ENCODE measurements at regions of chr2 and their contacts with region 1.

Region 1: GRCh38 chr2:225177098-225177497 is 134.8 kb upstream of the DOCK10 start:
- DNase-seq: peak; percentile 72
- H3K4me3 ChIP-seq: no peak overlapping the region
- H3K27ac ChIP-seq: no peak overlapping the region
- H3K4me1 ChIP-seq: peaks cover 5% of the 10 kb centered on the region
- H3K27me3 ChIP-seq: no peaks in the 10 kb centered on the region
- CTCF ChIP-seq: peak in 1 of 2 donors; percentile 36

Region 2: DNA sequence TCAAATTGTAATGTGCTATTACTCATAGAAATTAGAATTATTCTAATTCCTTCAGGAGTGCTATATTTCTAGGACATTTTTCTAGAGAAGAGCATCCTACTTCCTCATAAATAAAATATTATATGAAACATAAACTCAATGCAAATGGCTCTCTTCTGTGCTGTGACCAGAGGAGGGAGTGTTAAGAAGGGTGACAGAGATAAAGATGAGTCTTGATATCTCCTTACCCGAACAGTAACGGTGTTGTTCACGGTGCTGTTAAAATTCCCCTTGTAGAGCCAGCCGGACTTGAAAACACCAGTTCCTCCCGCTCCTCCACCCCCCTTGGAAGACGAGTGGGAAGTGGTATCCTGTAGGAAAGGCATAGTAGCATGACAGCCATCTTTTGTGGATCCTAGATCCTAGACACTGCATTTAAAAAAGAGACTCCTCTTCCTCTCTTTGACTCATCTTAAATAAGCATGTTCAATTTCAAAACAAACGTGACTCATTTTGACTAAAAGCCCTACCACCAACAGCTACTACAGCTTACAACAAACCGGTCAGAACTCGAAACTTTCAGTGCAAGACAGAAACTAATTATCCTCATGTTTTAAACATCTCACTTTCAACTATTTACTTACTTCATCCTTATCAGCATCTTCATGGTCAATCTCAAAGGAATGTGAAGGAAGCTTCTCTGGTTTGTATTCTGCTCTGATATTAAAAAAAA is 291.1 kb before region 1 on chr2:
- CTCF ChIA-PET with region 1: no interaction called
- dilution Hi-C with region 1: no loop called
- in situ Hi-C with region 1: no loop called
- intact Hi-C with region 1: loop called (anchors 10 kb)
- DNase-seq: peak; percentile 89
- H3K4me3 ChIP-seq: peak overlapping the region in 1 of 3 experiments; percentile 17
- H3K27ac ChIP-seq: peak overlapping the region; percentile 92
- H3K4me1 ChIP-seq: peaks cover 48% of the 10 kb centered on the region
- H3K27me3 ChIP-seq: no peaks in the 10 kb centered on the region
- CTCF ChIP-seq: no peak

Measured in mammary epithelial cell (primary cell).